Gastrocnemius medialis (tissue), 4 donors: ENCODE measurements at regions of chr11 and their contacts with region 1.

Region 1: DNA sequence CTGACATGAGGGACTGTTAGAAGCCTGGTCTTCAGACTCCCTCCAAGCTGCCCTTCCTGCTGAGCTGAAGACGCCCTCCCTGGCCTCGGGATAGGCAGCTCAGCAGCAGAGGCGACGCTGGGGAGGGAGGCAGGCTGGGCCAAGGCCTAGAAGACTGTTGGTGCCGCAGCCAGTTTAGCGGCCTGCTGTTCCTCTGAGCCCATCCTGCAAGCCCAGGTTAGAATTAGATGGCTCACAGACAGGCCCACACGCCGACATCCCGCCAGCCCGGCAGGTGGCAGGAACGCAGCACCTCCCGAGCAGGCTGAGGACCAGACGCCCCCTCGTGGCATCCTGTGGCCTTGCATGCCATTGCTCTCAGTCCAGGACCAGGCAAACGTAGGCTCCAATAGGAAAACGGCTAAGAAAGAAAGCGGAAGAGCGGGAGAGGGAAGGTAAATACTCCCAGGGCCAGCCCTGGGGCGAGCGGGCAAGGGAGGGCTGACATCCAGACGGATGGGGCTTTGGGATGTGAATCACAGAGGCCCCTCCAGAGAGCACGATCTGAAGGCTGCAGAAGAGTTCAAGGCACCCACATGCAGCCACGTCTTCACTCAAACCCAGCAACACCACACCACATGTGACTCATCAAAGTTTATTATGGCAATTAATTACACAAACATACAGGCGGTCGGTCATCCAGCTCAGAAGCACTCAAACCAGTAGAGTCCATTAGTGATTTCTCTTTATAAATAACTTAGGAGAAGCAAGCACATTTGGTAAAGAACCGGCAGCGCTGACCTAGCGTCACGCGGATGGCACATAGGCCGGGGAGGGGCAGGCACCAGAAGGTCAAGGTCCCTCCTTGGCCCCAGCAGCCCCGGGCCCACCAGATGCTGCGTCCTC is 27.6 kb downstream of the CD5 start:
- DNase-seq: peak; percentile 53 to 69
- ATAC-seq: peak; percentile 58 to 83
- H3K4me3 ChIP-seq: no peak overlapping the region
- H3K27ac ChIP-seq: peak overlapping the region in 1 of 4 donors; percentile 28
- H3K4me1 ChIP-seq: peaks cover 11 to 14% of the 10 kb centered on the region in 2 donors
- H3K27me3 ChIP-seq: no peaks in the 10 kb centered on the region
- CTCF ChIP-seq: peak; percentile 82 to 96 (median 92)
- POLR2A ChIP-seq: no peak

Region 2: GRCh38 chr11:60970369-60970774 is 159.5 kb before region 1 on chr11:
- in situ Hi-C with region 1: no loop called
- intact Hi-C with region 1: loop called (anchors 2 kb)
- DNase-seq: no peak
- ATAC-seq: peak in 1 of 2 donors; percentile 46
- H3K4me3 ChIP-seq: no peak overlapping the region
- H3K27ac ChIP-seq: no peak overlapping the region
- H3K4me1 ChIP-seq: no peaks in the 10 kb centered on the region
- H3K27me3 ChIP-seq: no peaks in the 10 kb centered on the region
- CTCF ChIP-seq: peak; percentile 41 to 85 (median 73)
- POLR2A ChIP-seq: no peak